ENCODE measurements at regions of chr12 and their contacts with region 1.

Region 1: GRCh38 chr12:120791669-120792176 is 66.1 kb downstream of the ACADS start:
- DNase-seq: no peak
- ATAC-seq: no peak
- H3K4me3 ChIP-seq: no peak overlapping the region
- H3K4me3 Mint-ChIP-seq: no peak overlapping the region
- H3K27ac ChIP-seq: no peak overlapping the region
- H3K27ac Mint-ChIP-seq: peak overlapping the region; percentile 1 to 4
- H3K4me1 ChIP-seq: no peaks in the 10 kb centered on the region
- H3K4me1 Mint-ChIP-seq: peaks cover 22 to 46% (median 27%) of the 10 kb centered on the region in 3 donors
- H3K27me3 ChIP-seq: no peaks in the 10 kb centered on the region
- H3K27me3 Mint-ChIP-seq: no peaks in the 10 kb centered on the region

Region 2: GRCh38 chr12:122137681-122138080 is 1346.0 kb after region 1 on chr12:
- CTCF ChIA-PET with region 1: no interaction called
- POLR2A ChIA-PET with region 1: interaction called in 1 of 2 experiments, 11 read pairs
- DNase-seq: no peak
- ATAC-seq: peak in 1 of 4 experiments; percentile 37
- H3K4me3 ChIP-seq: no peak overlapping the region
- H3K4me3 Mint-ChIP-seq: no peak overlapping the region
- H3K27ac ChIP-seq: no peak overlapping the region
- H3K27ac Mint-ChIP-seq: no peak overlapping the region
- H3K4me1 ChIP-seq: no peaks in the 10 kb centered on the region
- H3K4me1 Mint-ChIP-seq: no peaks in the 10 kb centered on the region
- H3K27me3 ChIP-seq: no peaks in the 10 kb centered on the region
- H3K27me3 Mint-ChIP-seq: no peaks in the 10 kb centered on the region